ENCODE measurements at regions of chr6 and their contacts with region 1.

Region 1: DNA sequence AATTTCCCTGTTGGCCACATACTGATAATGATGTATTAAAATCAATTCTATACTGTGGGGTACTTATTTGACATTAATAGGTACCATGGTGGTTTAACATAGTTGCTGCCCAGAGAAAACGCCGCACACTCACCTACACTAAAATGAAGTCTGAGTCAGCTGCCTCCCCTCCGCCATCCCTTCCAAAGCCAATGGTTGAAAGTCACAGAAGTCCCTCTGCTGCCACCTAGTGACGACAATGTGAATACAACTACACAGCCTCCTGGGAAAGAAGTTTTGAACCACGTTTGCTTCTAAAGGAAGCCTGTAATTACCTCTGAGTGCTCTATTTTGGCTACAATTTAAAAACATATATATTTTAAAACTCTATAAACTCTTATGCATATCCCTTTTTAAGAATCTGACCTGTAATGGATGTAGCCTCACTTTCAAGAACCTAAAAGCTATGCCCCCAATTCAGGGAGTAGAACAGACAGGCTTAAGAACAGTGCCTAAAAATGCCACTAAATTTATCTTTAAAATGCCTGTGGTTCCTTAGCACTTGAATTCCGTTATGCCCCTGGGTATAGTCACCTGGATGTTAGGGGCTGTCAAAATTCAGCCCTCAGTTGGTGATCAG is 20.6 kb upstream of the ECI2 start:
- DNase-seq: peak; percentile 72
- H3K4me3 ChIP-seq: no peak overlapping the region
- H3K27ac ChIP-seq: no peak overlapping the region
- H3K4me1 ChIP-seq: no peaks in the 10 kb centered on the region
- H3K27me3 ChIP-seq: no peaks in the 10 kb centered on the region; the same call in 1 of the 2 replicates
- CTCF ChIP-seq: peak; percentile 93
- EP300 ChIP-seq: no peak
- RAD21 ChIP-seq: peak; percentile 90

Region 2: GRCh38 chr6:4055420-4056041 is 100.4 kb before region 1 on chr6:
- CTCF ChIA-PET with region 1: interaction called, 19 read pairs
- POLR2A ChIA-PET with region 1: no interaction called
- DNase-seq: peak; percentile 20
- H3K4me3 ChIP-seq: no peak overlapping the region
- H3K27ac ChIP-seq: peak overlapping the region in 1 of 2 experiments; percentile 61; a peak in 2 of 4 replicates
- H3K4me1 ChIP-seq: peaks cover 0 to 22% of the 10 kb centered on the region in 2 experiments; a peak in 3 of 4 replicates
- H3K27me3 ChIP-seq: no peaks in the 10 kb centered on the region
- CTCF ChIP-seq: peak; percentile 70
- EP300 ChIP-seq: no peak
- RAD21 ChIP-seq: peak; percentile 63

Region 3: GRCh38 chr6:4139272-4139671 is 16.7 kb before region 1 on chr6:
- CTCF ChIA-PET with region 1: interaction called, 10 read pairs
- POLR2A ChIA-PET with region 1: no interaction called
- DNase-seq: no peak
- H3K4me3 ChIP-seq: no peak overlapping the region
- H3K27ac ChIP-seq: no peak overlapping the region
- H3K4me1 ChIP-seq: peaks cover 0 to under 1% of the 10 kb centered on the region in 2 experiments; a peak in 1 of 4 replicates
- H3K27me3 ChIP-seq: no peaks in the 10 kb centered on the region
- CTCF ChIP-seq: no peak
- EP300 ChIP-seq: no peak
- RAD21 ChIP-seq: no peak

Region 4: DNA sequence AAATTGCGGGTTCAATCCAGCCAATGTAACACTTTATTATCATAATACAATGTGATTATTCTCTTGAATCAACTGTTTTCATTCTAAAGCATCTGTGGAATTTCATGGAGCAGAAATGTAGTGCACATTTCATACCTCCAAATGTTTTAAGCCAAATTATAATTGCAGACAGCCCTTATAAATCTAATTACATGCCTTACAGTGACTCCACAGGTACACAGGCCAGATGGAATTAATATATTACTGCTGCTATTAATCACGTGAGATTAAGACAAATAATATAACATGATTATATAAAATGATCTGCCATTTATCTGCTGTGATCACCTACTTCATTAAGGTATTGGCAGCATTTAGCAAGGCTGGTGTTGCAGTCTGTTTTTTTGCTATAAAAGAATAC is 10.9 kb before region 1 on chr6:
- CTCF ChIA-PET with region 1: interaction called, 14 read pairs
- POLR2A ChIA-PET with region 1: no interaction called
- DNase-seq: no peak
- H3K4me3 ChIP-seq: no peak overlapping the region
- H3K27ac ChIP-seq: no peak overlapping the region
- H3K4me1 ChIP-seq: peaks cover 0 to 3% of the 10 kb centered on the region in 2 experiments; a peak in 1 of 4 replicates
- H3K27me3 ChIP-seq: no peaks in the 10 kb centered on the region
- CTCF ChIP-seq: no peak
- EP300 ChIP-seq: no peak
- RAD21 ChIP-seq: no peak

Measured in SK-N-SH (cell line).